ENCODE measurements at regions of chr17 and their contacts with region 1.

Region 1: DNA sequence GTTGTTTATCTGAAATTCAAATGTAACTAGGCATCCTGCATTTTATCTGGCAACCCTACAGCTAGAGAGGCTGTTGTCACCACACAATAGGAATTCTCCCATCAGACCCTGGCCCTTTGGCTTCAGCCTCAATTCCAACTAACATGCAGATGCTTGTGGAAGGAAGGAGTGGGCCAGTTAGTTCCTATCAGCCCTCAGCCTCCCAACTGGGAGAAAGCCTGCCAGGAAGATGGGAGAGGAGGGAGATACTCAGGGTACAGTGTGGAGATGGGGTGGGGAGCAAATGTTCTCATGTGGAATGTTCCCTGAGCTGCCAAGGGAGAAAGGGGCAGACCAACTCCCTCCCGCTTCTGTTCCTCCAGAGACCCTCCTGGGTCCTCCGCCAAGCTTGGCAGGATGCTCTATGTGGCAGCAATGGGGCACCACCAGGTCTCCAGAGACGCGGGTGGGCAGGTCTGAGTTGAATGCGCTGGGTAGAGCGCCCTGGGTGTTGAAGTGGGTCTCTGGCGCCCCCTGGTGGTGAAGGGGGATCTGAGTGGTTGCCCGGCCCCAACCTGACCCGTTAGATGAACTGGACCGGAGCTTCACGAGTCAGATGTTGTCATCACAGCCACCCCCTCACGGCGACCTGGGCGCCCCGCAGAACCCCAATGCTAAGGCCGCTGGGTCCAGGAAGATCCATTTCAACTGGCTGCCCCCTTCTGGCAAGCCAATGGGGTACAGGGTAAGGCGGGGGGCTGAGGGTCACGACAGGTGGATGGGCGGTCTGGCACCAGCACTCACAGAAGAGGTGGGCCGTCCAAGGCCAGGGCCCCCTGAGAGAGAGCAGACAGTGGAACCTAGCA is 15.2 kb downstream of the GALK1 start:
- DNase-seq: peak; percentile 78 to 85 (median 80)
- H3K4me3 ChIP-seq: peak overlapping the region in 1 of 7 experiments; percentile 37
- H3K27ac ChIP-seq: no peak overlapping the region
- H3K4me1 ChIP-seq: peaks cover 0 to 22% (median 18%) of the 10 kb centered on the region in 4 experiments
- H3K27me3 ChIP-seq: no peaks in the 10 kb centered on the region

Region 2: DNA sequence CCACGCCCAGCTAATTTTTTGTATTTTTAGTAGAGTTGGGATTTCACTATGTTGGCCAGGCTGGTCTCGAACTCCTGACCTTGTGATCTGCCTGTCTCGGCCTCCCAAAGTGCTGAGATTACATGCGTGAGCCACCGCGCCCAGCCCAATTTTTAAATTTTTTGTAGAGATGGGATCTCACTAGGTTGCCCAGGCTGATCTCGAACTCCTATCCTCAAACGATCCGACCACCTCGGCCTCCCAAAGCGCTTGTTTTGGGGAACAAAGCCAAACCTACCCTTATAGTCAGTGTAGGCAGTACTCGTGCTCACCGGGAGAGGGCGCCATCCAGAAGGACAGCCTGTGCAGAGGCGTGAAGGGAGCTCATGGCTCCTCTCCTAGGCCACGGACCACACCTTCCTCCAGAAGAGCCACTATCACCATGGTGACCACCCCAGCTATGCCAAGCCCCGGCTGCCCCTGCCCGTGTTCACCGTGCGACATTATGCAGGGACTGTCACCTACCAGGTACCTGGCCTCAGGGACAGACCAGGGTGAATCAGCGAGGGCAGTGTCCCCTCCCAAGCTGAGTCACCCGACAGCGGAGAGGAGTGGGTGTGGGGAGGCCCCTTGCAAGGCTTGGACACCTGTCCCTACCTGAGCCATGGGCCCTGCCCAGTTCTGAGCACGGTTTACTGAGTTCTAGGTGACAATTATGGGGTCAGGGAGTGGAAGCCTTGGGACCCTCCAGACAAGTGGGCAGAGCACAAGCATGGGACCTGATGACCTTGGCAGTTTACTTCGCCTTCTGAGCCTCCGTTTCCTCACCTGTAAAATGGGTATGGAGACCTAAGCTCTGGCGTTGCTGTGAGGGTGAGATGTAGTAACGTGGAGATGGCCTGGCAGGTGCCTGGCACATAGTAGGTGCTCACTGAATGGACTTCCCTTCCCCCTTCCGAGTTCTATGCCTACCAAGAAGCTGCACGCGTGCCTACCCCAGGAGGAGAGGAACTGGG is 148.4 kb before region 1 on chr17:
- CTCF ChIA-PET with region 1: interaction called, 15 read pairs
- POLR2A ChIA-PET with region 1: no interaction called
- DNase-seq: peak; percentile 71 to 84 (median 83)
- H3K4me3 ChIP-seq: no peak overlapping the region
- H3K27ac ChIP-seq: no peak overlapping the region
- H3K4me1 ChIP-seq: no peaks in the 10 kb centered on the region
- H3K27me3 ChIP-seq: no peaks in the 10 kb centered on the region

Region 3: DNA sequence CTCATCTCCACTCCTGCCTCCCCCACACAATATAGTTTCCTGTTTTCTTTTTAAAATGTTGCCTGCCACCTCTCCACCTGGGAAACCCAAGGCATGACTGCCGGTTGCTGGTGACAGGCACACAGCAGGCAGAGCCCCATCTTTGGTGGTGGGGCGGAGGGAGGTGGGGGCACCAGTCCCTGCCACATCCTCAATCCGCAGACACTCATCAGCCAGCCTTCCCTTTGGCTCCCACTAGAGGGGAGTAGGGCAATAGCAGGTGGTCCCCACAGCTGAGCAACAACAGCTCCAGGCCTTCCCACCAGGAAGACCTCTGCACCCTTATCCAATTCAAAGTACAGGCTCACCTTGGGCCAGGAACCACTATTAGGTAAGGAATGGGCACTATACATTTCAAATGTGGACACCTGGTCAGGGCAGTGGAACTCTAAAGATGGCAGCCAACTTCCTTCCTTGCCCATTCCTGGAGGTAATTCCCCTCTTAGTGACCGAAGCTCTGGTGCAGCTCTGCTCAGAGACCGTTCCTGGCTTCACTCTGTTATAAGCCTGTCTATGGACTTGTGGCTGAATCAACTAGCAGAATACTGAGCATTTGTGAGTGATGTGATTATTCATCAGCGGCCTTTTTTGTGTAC is 96.7 kb before region 1 on chr17:
- CTCF ChIA-PET with region 1: interaction called, 74 read pairs
- POLR2A ChIA-PET with region 1: no interaction called
- DNase-seq: peak; percentile 71 to 83 (median 83)
- H3K4me3 ChIP-seq: peak overlapping the region in 2 of 7 experiments; percentile 11 to 24
- H3K27ac ChIP-seq: peak overlapping the region in 1 of 2 experiments; percentile 43
- H3K4me1 ChIP-seq: peaks cover 0 to 15% (median 10%) of the 10 kb centered on the region in 4 experiments
- H3K27me3 ChIP-seq: no peaks in the 10 kb centered on the region

Region 4: DNA sequence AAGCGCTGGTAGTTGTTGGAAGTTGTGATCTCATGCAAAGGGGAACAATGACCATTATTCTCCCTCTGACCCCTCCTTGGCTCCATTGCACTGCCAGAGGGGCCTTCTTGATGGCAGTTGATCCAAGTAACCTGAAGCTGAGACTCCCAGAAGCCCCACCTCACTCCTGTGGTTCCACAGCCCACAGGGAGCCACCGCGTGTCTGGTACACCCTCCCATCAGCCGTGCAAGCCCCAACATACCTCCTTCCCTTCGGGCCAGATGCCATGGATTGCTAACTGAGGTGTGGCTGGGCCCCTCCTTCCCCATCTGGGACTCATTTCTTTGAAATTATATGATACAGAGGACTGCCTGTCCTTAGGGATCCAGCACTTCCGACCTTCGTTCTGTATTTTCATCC is 64.8 kb before region 1 on chr17:
- CTCF ChIA-PET with region 1: interaction called, 257 read pairs
- POLR2A ChIA-PET with region 1: interaction called, 3 read pairs
- DNase-seq: no peak
- H3K4me3 ChIP-seq: no peak overlapping the region
- H3K27ac ChIP-seq: no peak overlapping the region
- H3K4me1 ChIP-seq: peaks cover 12 to 34% (median 25%) of the 10 kb centered on the region in 4 experiments
- H3K27me3 ChIP-seq: no peaks in the 10 kb centered on the region

Region 5: DNA sequence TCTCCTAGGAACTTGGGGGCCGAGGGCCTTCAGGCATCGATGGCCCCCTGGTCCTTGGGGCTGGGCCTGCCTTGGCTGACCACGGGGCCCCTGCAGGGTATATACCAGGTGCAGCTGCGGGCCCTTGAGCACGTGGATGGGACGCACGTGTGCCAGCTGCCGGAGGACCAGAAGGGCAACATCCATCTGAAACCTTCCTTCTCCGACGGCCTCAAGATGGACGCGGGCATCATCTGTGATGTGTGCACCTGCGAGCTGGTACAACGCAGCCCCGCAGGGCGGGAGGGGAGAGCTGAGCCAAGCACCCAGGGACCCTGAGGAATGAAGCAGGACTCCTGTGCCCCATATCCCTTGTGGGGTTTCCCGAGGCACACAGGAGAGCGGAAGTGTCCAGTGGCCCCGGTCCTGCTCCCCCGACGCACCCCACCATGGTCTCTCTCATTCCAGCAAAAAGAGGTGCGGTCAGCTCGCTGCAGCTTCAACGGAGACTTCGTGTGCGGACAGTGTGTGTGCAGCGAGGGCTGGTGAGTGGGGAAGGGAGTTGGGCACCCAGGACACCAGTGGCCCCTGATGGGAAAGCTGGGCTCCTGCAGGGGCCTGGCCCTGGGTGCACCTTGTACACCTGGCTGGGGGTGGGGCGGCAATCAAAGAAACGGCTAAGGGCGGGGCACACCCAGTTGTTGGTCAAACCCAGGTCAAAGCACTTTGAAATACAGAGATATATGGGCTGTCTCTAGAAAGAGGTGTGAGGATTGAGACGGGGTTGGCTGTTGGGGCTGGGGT is 17.9 kb before region 1 on chr17:
- CTCF ChIA-PET with region 1: interaction called, 50 read pairs
- POLR2A ChIA-PET with region 1: no interaction called
- DNase-seq: no peak
- H3K4me3 ChIP-seq: no peak overlapping the region
- H3K27ac ChIP-seq: no peak overlapping the region
- H3K4me1 ChIP-seq: peaks cover 0 to 5% (median 1%) of the 10 kb centered on the region in 4 experiments
- H3K27me3 ChIP-seq: no peaks in the 10 kb centered on the region

Region 6: GRCh38 chr17:75827252-75828115 is 77.7 kb after region 1 on chr17:
- CTCF ChIA-PET with region 1: interaction called, 21 read pairs
- POLR2A ChIA-PET with region 1: interaction called, 4 read pairs
- DNase-seq: peak; percentile 81 to 93 (median 90)
- H3K4me3 ChIP-seq: peak overlapping the region in 2 of 7 experiments; percentile 24 to 40
- H3K27ac ChIP-seq: peak overlapping the region in 1 of 2 experiments; percentile 47
- H3K4me1 ChIP-seq: peaks cover 2 to 44% (median 36%) of the 10 kb centered on the region in 4 experiments
- H3K27me3 ChIP-seq: no peaks in the 10 kb centered on the region

Region 7: GRCh38 chr17:75904749-75905521 is 155.2 kb after region 1 on chr17 and contains the start of gene MRPL38:
- CTCF ChIA-PET with region 1: no interaction called
- POLR2A ChIA-PET with region 1: no interaction called
- DNase-seq: peak; percentile 95 to 98 (median 97)
- H3K4me3 ChIP-seq: peak within 1 kb of the TSS; percentile 71 to 91 (median 87)
- H3K27ac ChIP-seq: peak within 1 kb of the TSS; percentile 77 to 80
- H3K4me1 ChIP-seq: peaks cover 0 to 31% (median 22%) of the 10 kb centered on the region in 4 experiments
- H3K27me3 ChIP-seq: no peaks in the 10 kb centered on the region

Region 8: GRCh38 chr17:75917141-75917916 is 167.6 kb after region 1 on chr17:
- CTCF ChIA-PET with region 1: no interaction called
- POLR2A ChIA-PET with region 1: no interaction called
- DNase-seq: no peak
- H3K4me3 ChIP-seq: no peak overlapping the region
- H3K27ac ChIP-seq: no peak overlapping the region
- H3K4me1 ChIP-seq: peaks cover 0 to 3% (median 0%) of the 10 kb centered on the region in 4 experiments
- H3K27me3 ChIP-seq: no peaks in the 10 kb centered on the region